Caco-2 (cell line): ENCODE measurements at regions of chr1 and their contacts with region 1.

Region 1: DNA sequence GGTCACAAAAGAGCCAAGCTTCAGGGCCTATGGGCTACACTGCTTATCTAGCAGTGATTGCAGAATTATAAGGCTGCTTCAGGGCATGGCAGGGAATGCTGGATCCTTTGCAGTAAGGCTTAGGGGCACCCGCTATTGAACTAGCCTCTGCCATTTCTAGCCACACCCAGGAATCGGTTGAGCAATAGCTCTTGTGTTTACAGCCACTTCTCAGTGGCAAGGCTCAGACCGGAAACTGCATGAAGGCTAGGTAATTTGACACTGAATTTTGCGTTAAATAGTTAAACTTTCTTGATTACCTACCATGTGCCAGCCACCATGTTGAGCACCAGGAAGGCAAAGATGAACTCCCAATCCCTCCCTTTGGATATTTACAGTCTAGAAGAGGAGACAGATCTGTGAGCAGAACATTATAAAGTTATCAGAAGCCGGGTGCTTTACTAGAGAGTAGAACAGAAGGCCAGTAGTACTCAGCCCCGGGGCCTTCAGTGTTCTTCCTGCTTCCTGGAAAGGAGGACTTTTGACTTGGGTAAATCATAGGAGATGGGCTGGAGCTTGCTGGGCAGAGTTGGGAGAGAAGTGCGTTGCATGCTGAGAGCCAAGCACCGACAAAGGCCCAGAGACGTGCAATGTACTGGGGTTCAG is 98.6 kb upstream of the LPGAT1 start:
- DNase-seq: peak; percentile 44 to 66
- H3K4me3 ChIP-seq: no peak overlapping the region
- H3K4me3 Mint-ChIP-seq: no peak overlapping the region
- H3K27ac Mint-ChIP-seq: peak overlapping the region; percentile 23
- H3K4me1 ChIP-seq: peaks cover 26% of the 10 kb centered on the region
- H3K4me1 Mint-ChIP-seq: peaks cover 20% of the 10 kb centered on the region
- H3K27me3 ChIP-seq: no peaks in the 10 kb centered on the region
- H3K27me3 Mint-ChIP-seq: no peaks in the 10 kb centered on the region
- CTCF ChIP-seq: no peak

Region 2: DNA sequence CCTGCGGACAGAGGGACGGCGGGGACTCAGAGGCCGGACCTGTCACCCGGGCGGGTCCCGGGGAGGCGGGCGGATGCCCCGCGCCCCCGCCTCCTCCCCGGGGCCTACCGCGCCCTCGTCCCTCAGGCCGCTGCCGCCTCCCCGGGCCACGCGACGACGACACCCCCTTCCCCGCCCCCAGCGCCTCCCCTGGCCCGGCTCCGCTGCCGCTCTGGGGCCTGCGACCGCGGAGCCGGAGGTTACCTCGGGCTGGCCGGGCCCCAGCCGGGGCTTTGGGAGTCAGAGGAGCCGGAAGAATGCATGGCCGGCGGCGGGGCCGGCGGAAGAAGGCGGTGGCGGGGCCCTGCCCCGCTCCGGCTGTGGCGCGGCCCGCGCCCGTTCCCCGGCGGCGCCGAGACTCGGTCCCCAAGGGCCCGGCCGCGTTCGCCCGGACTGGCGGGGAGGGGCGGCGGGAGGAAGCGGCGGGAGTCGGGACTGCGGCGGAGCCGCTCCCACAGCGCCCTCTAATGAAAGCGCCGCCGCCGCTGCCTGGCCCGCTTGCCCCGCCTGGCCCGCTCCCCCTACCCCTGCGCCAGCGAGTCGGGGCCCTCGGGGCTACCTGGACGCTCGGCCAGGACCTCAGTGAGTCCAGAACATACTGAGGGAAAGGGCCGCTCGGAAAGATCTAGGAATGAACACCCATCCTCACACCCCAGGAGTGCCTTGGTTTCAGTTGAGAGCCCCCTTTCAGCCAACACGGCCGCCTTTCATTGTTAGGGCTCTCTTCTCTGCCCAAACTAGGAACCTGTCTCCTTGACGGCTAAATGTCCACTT is 98.6 kb before region 1 on chr1 and contains the start of gene LPGAT1:
- CTCF ChIA-PET with region 1: interaction called, 3 read pairs
- POLR2A ChIA-PET with region 1: no interaction called
- intact Hi-C with region 1: loop called (anchors 5 kb)
- DNase-seq: peak; percentile 70 to 87
- H3K4me3 ChIP-seq: peak within 1 kb of the TSS; percentile 56
- H3K4me3 Mint-ChIP-seq: peak within 1 kb of the TSS; percentile 96
- H3K27ac Mint-ChIP-seq: peak within 1 kb of the TSS; percentile 76
- H3K4me1 ChIP-seq: no peaks in the 10 kb centered on the region
- H3K4me1 Mint-ChIP-seq: peaks cover 5% of the 10 kb centered on the region
- H3K27me3 ChIP-seq: no peaks in the 10 kb centered on the region
- H3K27me3 Mint-ChIP-seq: no peaks in the 10 kb centered on the region
- CTCF ChIP-seq: peak; percentile 49 to 55
- total RNA-seq, gene LPGAT1: 25.6 and 34.0 TPM in 2 replicates

Region 3: DNA sequence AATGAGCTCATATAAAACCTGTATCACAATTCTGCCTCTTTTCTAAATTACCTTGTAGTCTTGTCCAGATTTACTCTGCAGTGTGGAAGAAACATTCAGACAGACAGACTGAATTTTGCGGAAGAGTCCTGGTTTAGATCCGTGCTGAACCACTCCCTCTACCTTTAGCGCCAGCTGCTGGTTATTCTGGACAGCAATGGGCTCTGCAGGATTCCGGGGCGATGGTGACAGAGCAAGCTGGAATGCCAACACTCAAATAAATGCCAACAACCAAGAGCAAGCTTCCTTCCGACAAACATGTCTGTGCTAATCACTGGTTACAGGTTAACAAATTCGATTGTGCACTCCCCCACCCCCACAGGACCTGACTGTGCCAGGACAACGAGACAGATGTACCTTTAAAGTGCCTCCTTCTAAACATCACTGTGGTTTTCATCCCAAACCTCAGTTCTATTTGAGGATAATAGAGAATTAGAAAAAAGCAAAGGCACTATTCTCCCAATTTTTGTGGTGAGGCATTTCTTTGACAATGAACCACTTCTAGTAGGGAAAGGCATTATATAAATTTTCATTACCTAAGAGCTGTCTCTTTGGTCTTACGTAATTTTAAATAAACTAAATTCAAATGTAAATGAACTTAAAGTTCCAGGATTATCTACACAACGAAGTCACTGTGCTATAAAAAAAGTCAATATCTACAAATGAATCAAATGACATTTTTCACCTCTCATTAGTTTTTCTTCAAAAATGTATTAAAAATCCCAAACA is 15.8 kb after region 1 on chr1:
- CTCF ChIA-PET with region 1: no interaction called
- POLR2A ChIA-PET with region 1: no interaction called
- intact Hi-C with region 1: loop called (anchors 1 kb)
- DNase-seq: peak; percentile 53 to 64
- H3K4me3 ChIP-seq: no peak overlapping the region
- H3K4me3 Mint-ChIP-seq: no peak overlapping the region
- H3K27ac Mint-ChIP-seq: no peak overlapping the region
- H3K4me1 ChIP-seq: no peaks in the 10 kb centered on the region
- H3K4me1 Mint-ChIP-seq: no peaks in the 10 kb centered on the region
- H3K27me3 ChIP-seq: no peaks in the 10 kb centered on the region
- H3K27me3 Mint-ChIP-seq: no peaks in the 10 kb centered on the region
- CTCF ChIP-seq: peak; percentile 37 to 85

Region 4: DNA sequence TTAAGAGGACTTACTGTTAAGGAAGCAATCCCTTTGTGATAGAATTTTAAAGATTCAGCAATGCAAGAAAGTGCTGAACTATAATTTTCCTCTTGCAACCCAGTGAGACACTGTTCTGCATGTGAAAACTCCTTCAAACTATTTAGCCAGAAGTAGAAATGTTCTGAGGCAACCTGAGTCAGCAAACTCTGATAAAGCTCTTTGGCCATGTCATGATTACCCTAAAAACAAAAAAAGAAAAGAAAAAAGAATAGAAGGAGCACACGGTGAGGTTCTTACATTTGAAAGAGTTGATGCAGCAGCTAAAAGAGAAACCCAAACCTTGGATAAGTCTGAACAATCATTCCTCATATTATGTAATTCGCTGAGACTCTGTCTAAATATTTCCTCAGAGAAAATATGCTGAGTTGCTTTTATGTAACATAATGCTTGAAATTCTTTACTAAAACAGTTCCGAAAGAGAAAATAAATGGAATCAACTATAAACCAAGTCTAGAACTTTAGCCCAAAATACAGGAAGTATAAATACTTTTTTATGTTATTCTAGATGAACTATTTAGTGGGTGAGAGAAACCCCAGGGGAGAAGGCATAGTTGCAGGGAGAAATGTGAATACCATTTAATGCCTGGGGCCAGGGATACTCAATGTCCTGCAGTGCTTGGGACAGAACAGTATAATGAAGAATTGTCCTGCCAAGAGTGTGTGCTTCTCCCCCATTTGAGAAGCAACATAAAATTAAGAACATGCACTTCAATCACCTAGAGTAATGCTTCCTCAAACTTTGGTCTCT is 46.2 kb after region 1 on chr1:
- CTCF ChIA-PET with region 1: no interaction called
- POLR2A ChIA-PET with region 1: no interaction called
- intact Hi-C with region 1: no loop called
- DNase-seq: no peak
- H3K4me3 ChIP-seq: no peak overlapping the region
- H3K4me3 Mint-ChIP-seq: no peak overlapping the region
- H3K27ac Mint-ChIP-seq: no peak overlapping the region
- H3K4me1 ChIP-seq: no peaks in the 10 kb centered on the region
- H3K4me1 Mint-ChIP-seq: no peaks in the 10 kb centered on the region
- H3K27me3 ChIP-seq: no peaks in the 10 kb centered on the region
- H3K27me3 Mint-ChIP-seq: no peaks in the 10 kb centered on the region
- CTCF ChIP-seq: no peak